ENCODE measurements at regions of chr1 and their contacts with region 1.

Region 1: GRCh38 chr1:15835741-15836510 is 11.6 kb upstream of the SPEN start:
- DNase-seq: peak; percentile 88

Region 2: DNA sequence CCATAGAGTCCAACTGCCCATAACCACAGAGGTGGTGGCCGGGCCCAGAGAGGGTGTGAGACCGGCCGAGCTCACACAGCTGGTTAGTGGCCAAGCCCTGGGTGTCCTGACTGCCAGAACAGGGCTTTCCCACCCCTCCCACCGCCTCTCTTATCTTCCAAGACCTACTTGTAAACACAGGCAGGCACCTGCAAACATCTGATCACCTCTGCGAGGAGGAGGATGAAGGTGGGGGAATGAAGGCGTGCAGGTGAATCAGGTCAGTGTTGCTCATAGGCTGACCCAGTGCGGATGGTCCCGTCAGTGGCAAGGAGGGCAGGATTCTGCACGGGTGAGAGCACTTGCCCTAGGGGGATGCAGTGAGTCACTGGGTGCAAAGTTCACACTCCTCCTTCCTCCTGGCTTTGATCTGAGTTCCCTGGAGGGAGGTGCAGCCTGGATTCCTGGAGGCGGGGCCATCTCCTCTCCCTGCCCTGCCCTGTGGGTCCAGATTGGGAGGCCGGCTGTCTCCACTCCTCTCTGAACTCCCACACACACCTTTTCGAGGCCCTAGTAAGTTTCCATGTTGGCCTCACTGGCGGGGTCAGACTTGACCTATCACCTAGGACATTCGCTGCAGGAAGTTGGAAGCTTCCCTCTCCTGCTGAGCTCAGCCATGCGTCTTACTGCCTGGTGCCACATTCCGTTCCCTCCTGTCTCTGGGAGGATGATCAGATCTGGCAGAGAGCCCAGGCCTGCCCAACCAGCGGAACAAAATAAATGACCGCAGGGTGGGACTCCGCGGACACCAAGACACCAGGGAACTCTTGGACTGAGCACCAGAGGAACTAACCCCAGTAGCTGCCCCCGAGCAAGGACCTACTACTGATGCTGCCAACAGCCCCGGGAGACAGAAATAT is 35.7 kb before region 1 on chr1:
- CTCF ChIA-PET with region 1: interaction called, 3 read pairs
- POLR2A ChIA-PET with region 1: interaction called, 26 read pairs
- DNase-seq: peak; percentile 37

Region 3: GRCh38 chr1:15820478-15820877 is 15.4 kb before region 1 on chr1:
- CTCF ChIA-PET with region 1: interaction called, 13 read pairs
- POLR2A ChIA-PET with region 1: interaction called, 10 read pairs
- DNase-seq: no peak

Region 4: DNA sequence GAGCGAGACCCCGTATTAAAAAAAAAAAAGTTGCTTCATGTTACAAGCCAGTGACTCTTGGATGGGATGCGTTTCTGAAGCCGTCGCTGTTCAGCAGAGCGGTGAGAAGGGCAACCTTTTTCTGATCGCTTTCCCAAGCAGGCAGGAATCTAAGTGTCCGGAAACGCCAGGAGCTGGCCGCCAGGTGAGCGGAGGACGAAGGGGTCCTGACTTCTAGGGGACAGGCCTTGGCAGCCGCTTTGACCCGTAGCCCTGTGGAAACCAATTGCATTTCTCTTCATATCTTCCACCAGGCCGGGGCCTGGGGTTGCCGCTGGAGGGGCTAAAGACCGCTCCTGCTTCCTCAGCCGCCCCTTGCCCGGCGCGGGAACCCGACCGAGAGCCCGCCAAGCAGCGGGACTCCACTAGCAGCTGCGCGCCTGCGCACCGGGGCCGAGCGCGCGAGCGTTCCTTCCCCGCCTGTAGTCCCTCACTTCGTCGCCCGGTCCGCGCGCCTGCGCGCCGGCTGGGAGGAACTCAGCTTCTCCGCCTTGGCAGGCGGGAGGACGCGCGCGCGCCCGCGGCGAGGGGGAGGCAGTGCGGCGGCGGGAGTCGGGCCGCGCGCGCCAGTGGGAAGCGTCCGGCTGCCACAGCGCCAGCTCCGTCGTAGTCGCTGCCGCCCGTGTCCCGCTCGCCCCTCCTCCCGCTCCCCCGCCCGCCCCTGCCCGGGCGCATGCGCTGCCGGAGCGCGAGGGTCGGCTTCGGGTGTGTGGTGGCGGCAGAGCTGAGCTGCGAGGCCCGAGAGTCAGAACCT is 11.4 kb after region 1 on chr1 and contains the start of gene SPEN:
- CTCF ChIA-PET with region 1: interaction called, 4 read pairs
- POLR2A ChIA-PET with region 1: interaction called, 187 read pairs
- DNase-seq: peak; percentile 86

Region 5: GRCh38 chr1:15885701-15886610 is 50.0 kb after region 1 on chr1:
- CTCF ChIA-PET with region 1: no interaction called
- POLR2A ChIA-PET with region 1: interaction called, 14 read pairs
- DNase-seq: peak; percentile 85

Region 6: GRCh38 chr1:15923241-15923640 is 87.3 kb after region 1 on chr1:
- CTCF ChIA-PET with region 1: no interaction called
- POLR2A ChIA-PET with region 1: no interaction called
- DNase-seq: no peak

Region 7: GRCh38 chr1:15952317-15953258 is 116.7 kb after region 1 on chr1:
- CTCF ChIA-PET with region 1: no interaction called
- POLR2A ChIA-PET with region 1: no interaction called
- DNase-seq: no peak

Region 8: GRCh38 chr1:15963968-15964648 is 128.2 kb after region 1 on chr1:
- CTCF ChIA-PET with region 1: interaction called, 11 read pairs
- POLR2A ChIA-PET with region 1: interaction called, 4 read pairs
- DNase-seq: no peak

Region 9: GRCh38 chr1:15975805-15976680 is 140.1 kb after region 1 on chr1 and contains the start of gene ZBTB17:
- CTCF ChIA-PET with region 1: no interaction called
- POLR2A ChIA-PET with region 1: interaction called, 13 read pairs
- DNase-seq: peak; percentile 97